CD8-positive, alpha-beta T cell (primary cell): ENCODE measurements at regions of chr2 and their contacts with region 1.

Region 1: DNA sequence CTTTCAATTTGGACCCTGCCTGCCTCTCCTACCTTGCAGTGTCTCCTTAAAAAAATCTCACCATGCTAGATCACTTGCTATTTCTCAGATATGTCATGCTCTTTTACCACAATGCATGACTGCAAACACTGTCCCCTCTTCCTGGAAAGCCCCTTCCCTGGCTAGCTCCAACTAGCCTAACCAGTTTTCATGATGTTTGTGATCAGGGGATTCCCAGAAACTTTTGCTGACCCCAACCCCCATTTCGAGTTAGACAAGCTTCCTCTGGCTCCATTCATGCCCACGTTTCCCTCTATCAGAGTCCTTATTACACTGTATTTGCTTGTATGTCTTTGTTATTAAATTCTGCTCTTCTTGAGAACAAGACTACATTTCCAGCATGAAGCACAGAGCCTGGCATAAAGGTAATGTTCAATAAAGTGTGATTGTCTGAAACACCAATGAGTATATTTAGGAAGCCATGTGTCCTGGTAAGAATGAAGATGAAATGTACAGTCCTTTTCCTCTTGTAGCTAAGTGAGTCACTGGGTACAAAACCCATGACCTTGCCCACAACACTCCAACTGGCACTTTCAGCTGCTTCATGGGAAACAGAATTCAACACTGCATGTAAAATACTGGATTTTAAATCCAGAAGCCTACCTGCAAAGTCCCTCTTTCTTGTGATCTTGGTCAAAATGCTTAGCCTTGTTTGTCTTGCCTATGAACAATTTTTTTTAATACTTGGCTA is 62.0 kb upstream of the ATL2 start:
- DNase-seq: no peak
- ATAC-seq: no peak
- H3K4me3 ChIP-seq: no peak overlapping the region
- H3K4me3 Mint-ChIP-seq: no peak overlapping the region
- H3K27ac ChIP-seq: no peak overlapping the region
- H3K27ac Mint-ChIP-seq: no peak overlapping the region
- H3K4me1 ChIP-seq: no peaks in the 10 kb centered on the region
- H3K4me1 Mint-ChIP-seq: no peaks in the 10 kb centered on the region
- H3K27me3 ChIP-seq: no peaks in the 10 kb centered on the region
- H3K27me3 Mint-ChIP-seq: peaks cover 10% of the 10 kb centered on the region
- CTCF ChIP-seq: no peak

Region 2: GRCh38 chr2:38352336-38352735 is 86.7 kb before region 1 on chr2:
- CTCF ChIA-PET with region 1: no interaction called
- POLR2A ChIA-PET with region 1: no interaction called
- intact Hi-C with region 1: loop called in 1 of 2 experiments (anchors 5 kb)
- DNase-seq: no peak
- ATAC-seq: no peak
- H3K4me3 ChIP-seq: no peak overlapping the region
- H3K4me3 Mint-ChIP-seq: no peak overlapping the region
- H3K27ac ChIP-seq: no peak overlapping the region
- H3K27ac Mint-ChIP-seq: no peak overlapping the region
- H3K4me1 ChIP-seq: peaks cover 8% of the 10 kb centered on the region
- H3K4me1 Mint-ChIP-seq: peaks cover 31% of the 10 kb centered on the region
- H3K27me3 ChIP-seq: no peaks in the 10 kb centered on the region
- H3K27me3 Mint-ChIP-seq: no peaks in the 10 kb centered on the region
- CTCF ChIP-seq: no peak

Region 3: GRCh38 chr2:38417745-38418689 is 21.0 kb before region 1 on chr2:
- CTCF ChIA-PET with region 1: no interaction called
- POLR2A ChIA-PET with region 1: no interaction called
- intact Hi-C with region 1: no loop called
- DNase-seq: no peak
- ATAC-seq: no peak
- H3K4me3 ChIP-seq: no peak overlapping the region
- H3K4me3 Mint-ChIP-seq: no peak overlapping the region
- H3K27ac ChIP-seq: no peak overlapping the region
- H3K27ac Mint-ChIP-seq: no peak overlapping the region
- H3K4me1 ChIP-seq: no peaks in the 10 kb centered on the region
- H3K4me1 Mint-ChIP-seq: no peaks in the 10 kb centered on the region
- H3K27me3 ChIP-seq: no peaks in the 10 kb centered on the region
- H3K27me3 Mint-ChIP-seq: peaks cover 8% of the 10 kb centered on the region
- CTCF ChIP-seq: no peak